CD8-positive, alpha-beta memory T cell (primary cell): ENCODE measurements at regions of chr6 and their contacts with region 1.

Region 1: DNA sequence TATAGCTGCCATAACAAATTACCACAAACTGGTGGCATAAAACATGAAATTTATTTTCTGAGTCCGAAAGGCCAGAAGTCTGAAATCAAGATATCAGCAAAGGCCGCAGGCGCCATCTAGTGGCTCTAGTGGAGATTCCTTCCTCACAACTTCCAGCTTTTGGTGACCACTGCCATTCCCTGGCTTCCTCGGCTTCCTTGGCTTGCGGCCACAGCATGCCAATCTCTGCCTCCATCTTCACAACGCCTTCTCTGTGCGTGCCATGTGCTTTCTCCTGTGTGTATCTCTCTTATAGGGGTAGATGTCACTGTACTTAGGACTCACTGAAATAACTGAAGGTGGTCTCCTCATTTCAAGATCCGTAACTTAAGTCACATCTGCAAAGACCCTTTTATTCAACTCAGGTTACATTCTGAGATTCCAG is 5.4 kb upstream of the PLAGL1 start:
- DNase-seq: peak; percentile 31 to 70 (median 45)
- H3K4me3 ChIP-seq: no peak overlapping the region
- H3K4me3 Mint-ChIP-seq: no peak overlapping the region
- H3K27ac ChIP-seq: no peak overlapping the region
- H3K27ac Mint-ChIP-seq: peak overlapping the region in 1 of 8 donors; percentile 72
- H3K4me1 ChIP-seq: peaks cover 4% of the 10 kb centered on the region
- H3K4me1 Mint-ChIP-seq: peaks cover 2 to 5% (median 5%) of the 10 kb centered on the region in 3 donors
- H3K27me3 ChIP-seq: no peaks in the 10 kb centered on the region
- H3K27me3 Mint-ChIP-seq: peaks cover 11 to 18% of the 10 kb centered on the region in 2 donors

Region 2: DNA sequence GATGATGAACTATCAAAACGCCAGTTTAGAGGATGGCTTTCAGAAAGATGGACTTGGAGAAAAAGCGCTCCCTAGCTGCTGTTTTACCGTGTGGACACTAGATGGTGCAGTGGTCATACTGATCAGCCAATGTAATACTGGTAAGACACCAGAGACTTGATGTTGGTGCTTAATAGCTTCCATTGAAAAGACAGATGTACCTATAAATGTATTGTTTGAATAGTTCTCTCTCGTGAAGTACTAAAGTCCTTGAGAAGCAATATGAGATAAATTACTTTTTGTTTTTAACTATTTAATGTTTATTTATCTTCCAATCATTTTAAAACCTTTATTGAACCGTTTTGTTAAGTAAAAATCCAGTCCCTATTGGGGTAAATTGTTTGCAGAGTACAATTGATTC is 438.1 kb before region 1 on chr6:
- CTCF ChIA-PET with region 1: interaction called, 40 read pairs
- POLR2A ChIA-PET with region 1: no interaction called
- DNase-seq: peak in 4 of 5 donors; percentile 40 to 63 (median 54)
- H3K4me3 ChIP-seq: no peak overlapping the region
- H3K4me3 Mint-ChIP-seq: no peak overlapping the region
- H3K27ac ChIP-seq: no peak overlapping the region
- H3K27ac Mint-ChIP-seq: peak overlapping the region in 5 of 8 donors; percentile 5 to 66 (median 41)
- H3K4me1 ChIP-seq: no peaks in the 10 kb centered on the region
- H3K4me1 Mint-ChIP-seq: peaks cover 24 to 52% (median 38%) of the 10 kb centered on the region in 3 donors
- H3K27me3 ChIP-seq: no peaks in the 10 kb centered on the region
- H3K27me3 Mint-ChIP-seq: peaks cover 0 to 2% of the 10 kb centered on the region in 2 donors

Region 3: GRCh38 chr6:143940011-143940597 is 73.4 kb before region 1 on chr6:
- CTCF ChIA-PET with region 1: interaction called, 29 read pairs
- POLR2A ChIA-PET with region 1: no interaction called
- DNase-seq: peak; percentile 20 to 71 (median 45)
- H3K4me3 ChIP-seq: no peak overlapping the region
- H3K4me3 Mint-ChIP-seq: no peak overlapping the region
- H3K27ac ChIP-seq: no peak overlapping the region
- H3K27ac Mint-ChIP-seq: peak overlapping the region in 1 of 8 donors; percentile 12
- H3K4me1 ChIP-seq: peaks cover 4% of the 10 kb centered on the region
- H3K4me1 Mint-ChIP-seq: peaks cover 5 to 13% (median 11%) of the 10 kb centered on the region in 3 donors
- H3K27me3 ChIP-seq: peaks cover 3% of the 10 kb centered on the region
- H3K27me3 Mint-ChIP-seq: peaks cover 4 to 11% of the 10 kb centered on the region in 2 donors

Region 4: GRCh38 chr6:144063744-144064401 is 50.4 kb after region 1 on chr6:
- CTCF ChIA-PET with region 1: interaction called, 13 read pairs
- POLR2A ChIA-PET with region 1: interaction called, 3 read pairs
- DNase-seq: peak; percentile 88 to 94 (median 90)
- H3K4me3 ChIP-seq: peak overlapping the region; percentile 88
- H3K4me3 Mint-ChIP-seq: peak overlapping the region; percentile 84 to 97 (median 90)
- H3K27ac ChIP-seq: peak overlapping the region; percentile 82
- H3K27ac Mint-ChIP-seq: peak overlapping the region; percentile 82 to 99 (median 95)
- H3K4me1 ChIP-seq: peaks cover 11% of the 10 kb centered on the region
- H3K4me1 Mint-ChIP-seq: peaks cover 24 to 34% (median 26%) of the 10 kb centered on the region in 3 donors
- H3K27me3 ChIP-seq: no peaks in the 10 kb centered on the region
- H3K27me3 Mint-ChIP-seq: no peaks in the 10 kb centered on the region